ENCODE measurements at regions of chr5 and their contacts with region 1.

Region 1: DNA sequence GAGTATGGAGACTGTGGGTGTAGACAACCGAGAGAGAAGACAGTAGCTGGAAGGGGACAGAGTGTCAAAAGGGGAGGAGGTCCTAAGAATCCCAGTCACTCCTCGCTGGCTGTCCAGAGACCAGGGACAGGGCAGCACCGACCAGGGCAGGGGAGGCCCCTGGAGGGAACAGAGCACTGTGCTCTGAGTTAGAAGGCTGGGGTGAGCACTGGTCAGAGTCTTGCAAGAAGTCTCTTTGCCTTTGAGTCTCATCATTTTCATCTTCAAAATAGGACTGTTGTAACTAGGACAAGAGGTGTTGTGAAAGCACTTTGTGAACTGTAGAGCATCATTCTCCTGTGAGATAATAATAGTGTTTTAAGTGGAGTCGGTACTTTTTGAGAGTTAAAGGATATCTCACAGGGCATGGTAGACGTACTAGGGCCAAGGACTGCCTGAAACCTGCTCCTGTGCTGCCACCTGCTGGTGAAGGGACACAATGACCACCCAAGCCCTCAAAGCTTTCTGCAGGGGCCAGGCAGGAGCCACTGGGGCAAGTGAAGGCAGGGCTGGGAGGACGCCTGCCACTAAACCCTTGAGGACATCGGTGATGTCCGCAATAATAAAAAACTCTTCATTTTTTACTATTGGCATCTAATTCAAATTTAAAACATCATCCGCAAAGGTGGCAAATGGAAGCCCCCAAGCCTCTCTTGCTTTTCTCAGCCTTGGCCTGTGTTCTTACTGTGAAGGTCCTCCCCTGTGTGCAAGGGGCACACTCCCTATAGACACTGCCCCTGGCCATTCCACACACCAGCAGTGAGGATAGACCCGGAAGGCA is 28.2 kb downstream of the SLC6A7 start:
- DNase-seq: peak; percentile 86
- ATAC-seq: peak; percentile 98
- H3K4me3 Mint-ChIP-seq: no peak overlapping the region
- H3K27ac Mint-ChIP-seq: no peak overlapping the region
- H3K4me1 Mint-ChIP-seq: peaks cover 2% of the 10 kb centered on the region
- H3K27me3 Mint-ChIP-seq: peaks cover 6% of the 10 kb centered on the region
- CTCF ChIP-seq: peak; percentile 79

Region 2: GRCh38 chr5:150013931-150014330 is 204.2 kb before region 1 on chr5:
- CTCF ChIA-PET with region 1: no interaction called
- POLR2A ChIA-PET with region 1: no interaction called
- intact Hi-C with region 1: no loop called
- DNase-seq: no peak
- ATAC-seq: no peak
- H3K4me3 Mint-ChIP-seq: no peak overlapping the region
- H3K27ac Mint-ChIP-seq: no peak overlapping the region
- H3K4me1 Mint-ChIP-seq: peaks cover 4% of the 10 kb centered on the region
- H3K27me3 Mint-ChIP-seq: no peaks in the 10 kb centered on the region
- CTCF ChIP-seq: no peak

Region 3: GRCh38 chr5:150129813-150130492 is 88.1 kb before region 1 on chr5:
- CTCF ChIA-PET with region 1: interaction called, 13 read pairs
- POLR2A ChIA-PET with region 1: interaction called, 3 read pairs
- intact Hi-C with region 1: loop called (anchors 2 kb)
- DNase-seq: peak; percentile 68
- ATAC-seq: peak; percentile 93
- H3K4me3 Mint-ChIP-seq: no peak overlapping the region
- H3K27ac Mint-ChIP-seq: no peak overlapping the region
- H3K4me1 Mint-ChIP-seq: no peaks in the 10 kb centered on the region
- H3K27me3 Mint-ChIP-seq: no peaks in the 10 kb centered on the region
- CTCF ChIP-seq: peak; percentile 88

Region 4: DNA sequence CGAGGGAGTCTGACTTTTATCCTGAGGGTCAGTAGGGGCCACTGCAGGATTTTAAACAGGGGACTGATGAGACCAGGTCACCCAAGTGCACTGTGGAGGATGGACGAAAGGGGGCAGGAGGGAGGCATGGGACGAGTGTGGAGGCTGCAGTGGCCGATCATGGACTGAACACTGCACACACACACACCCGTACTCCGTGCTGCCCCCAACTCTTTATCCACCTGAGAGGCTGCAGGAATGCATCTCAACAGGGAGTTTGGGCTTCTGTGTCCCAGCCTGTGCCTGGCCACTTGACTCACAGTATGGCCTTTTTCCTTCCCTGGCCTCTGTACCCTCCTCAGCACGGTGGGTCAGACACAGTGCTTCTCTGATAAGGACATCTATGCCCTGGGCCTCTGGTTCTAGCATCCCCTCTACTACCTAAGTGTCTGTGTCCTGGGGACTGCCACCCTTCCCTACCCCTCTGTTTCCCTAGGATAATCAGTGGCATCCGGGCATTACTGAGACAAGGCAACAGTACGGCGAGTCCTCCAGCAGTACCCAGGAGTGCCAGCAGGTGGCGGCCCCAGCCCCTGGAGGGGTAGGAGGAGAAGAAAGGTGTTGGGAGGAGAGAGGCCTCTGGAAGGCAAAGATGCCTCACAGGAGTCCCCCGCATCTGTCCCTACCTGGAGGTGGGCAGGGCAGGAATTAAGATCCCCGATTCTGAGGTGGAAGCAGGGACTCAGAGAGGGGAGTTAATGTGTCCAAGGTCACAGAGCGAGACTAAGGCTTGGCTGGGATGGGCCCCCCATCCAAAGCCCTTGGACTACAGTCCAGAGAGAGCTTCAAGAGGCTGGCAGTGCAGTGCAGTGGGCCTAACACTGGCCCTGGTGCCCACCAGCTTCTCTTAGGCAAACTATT is 56.6 kb before region 1 on chr5:
- CTCF ChIA-PET with region 1: interaction called, 47 read pairs
- POLR2A ChIA-PET with region 1: no interaction called
- intact Hi-C with region 1: loop called (anchors 1 kb)
- DNase-seq: peak; percentile 85
- ATAC-seq: peak; percentile 97
- H3K4me3 Mint-ChIP-seq: no peak overlapping the region
- H3K27ac Mint-ChIP-seq: no peak overlapping the region
- H3K4me1 Mint-ChIP-seq: no peaks in the 10 kb centered on the region
- H3K27me3 Mint-ChIP-seq: peaks cover 7% of the 10 kb centered on the region
- CTCF ChIP-seq: peak; percentile 88

Region 5: DNA sequence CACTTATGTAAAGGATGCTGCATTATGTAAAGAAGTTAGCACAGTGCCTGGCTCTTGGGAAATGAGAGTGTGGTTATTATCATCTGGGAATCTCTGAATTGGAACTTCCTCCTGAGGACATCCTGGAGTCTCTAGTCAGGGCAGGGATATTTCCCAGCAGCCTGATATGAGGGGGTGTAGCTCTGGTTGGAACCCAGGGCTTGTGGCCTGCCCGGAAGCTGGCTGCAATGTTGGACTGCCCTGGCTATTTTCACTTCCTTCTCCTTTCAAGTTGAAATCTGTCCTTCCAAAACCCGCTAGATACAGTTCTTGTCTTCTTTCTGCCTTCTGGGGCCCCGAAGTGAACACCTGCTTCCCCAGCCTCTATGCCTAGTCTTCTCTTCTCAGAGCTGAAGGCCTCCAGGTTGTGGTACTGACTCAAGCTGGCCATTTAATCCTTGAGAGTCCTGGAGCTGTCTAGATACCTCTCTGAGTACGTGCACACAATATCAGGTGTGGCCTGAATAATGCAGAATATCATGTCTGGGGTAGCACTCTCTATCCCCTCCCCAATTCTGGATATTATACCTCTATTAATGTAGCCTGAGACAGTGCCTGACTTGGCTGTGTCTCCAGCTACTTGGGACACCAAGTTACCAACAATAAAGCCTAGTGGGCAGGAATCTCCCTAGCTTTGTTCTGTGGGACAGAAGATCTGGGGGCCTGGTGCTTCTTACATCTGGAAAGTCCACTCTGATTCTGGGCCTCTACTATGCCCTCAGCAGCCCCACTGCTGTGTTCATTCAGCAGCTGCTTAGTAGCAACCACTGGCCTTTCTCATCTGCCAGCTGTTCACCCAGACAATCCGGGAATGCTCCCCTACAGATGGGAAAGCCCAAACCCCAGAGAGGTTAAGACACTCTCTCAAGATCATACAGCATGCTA is 16.8 kb after region 1 on chr5:
- CTCF ChIA-PET with region 1: no interaction called
- POLR2A ChIA-PET with region 1: no interaction called
- intact Hi-C with region 1: no loop called
- DNase-seq: no peak
- ATAC-seq: no peak
- H3K4me3 Mint-ChIP-seq: no peak overlapping the region
- H3K27ac Mint-ChIP-seq: no peak overlapping the region
- H3K4me1 Mint-ChIP-seq: no peaks in the 10 kb centered on the region
- H3K27me3 Mint-ChIP-seq: no peaks in the 10 kb centered on the region
- CTCF ChIP-seq: no peak